Activated CD4-positive, alpha-beta T cell treated with anti-CD3 and anti-CD28 coated beads for 36 hours (primary cell): ENCODE measurements at regions of chr16 and their contacts with region 1.

Region 1: DNA sequence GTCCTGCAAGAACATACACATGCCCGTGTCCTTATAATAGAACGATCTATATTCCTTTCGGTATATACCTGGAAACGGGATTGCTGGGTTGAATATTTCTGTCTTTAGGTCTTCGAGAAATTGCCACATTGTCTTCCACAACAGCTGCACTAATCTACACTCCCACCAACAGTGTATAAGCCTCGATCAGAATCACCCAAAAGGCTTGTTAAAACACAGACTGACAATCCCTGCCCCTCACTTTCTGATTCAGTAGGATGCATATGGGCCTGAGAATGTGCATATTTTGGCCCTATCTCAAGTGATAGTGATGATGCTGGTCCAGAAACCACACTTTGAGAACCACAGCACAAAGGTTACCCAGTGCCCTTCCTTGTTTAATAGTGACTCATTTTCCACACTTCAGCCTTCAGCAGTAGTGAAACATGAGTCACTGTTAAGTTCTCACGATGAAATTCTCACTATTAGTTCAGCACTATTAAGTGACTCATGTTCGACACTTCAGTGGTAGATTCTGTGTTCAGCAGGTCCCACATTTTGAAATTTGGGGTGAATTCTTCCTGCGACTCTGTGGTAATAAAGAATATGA is 215.6 kb downstream of the GRIN2A start:
- DNase-seq: peak; percentile 31
- ATAC-seq: peak; percentile 83
- H3K4me3 Mint-ChIP-seq: no peak overlapping the region
- H3K27ac Mint-ChIP-seq: no peak overlapping the region
- H3K4me1 Mint-ChIP-seq: peaks cover 3% of the 10 kb centered on the region
- H3K27me3 Mint-ChIP-seq: peaks cover 10% of the 10 kb centered on the region

Region 2: DNA sequence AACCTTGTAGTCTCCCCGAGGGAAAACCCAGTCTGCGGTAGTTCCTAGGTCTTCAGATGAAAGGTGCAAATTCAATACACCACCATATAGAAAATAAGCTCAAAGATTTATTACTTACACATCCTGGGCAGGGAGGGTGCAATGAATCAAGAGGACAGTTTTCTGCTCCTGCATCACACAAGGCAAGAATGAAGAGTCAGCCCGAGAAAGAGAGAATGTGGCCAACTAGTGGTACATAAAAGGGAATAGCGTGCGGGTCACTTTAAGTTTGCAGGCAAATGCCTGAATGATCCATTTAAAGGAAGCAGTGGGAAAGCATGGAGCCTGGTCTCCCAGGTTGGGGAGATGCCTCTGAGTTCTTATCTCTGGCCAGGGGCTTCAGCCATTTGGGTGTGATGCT is 187.8 kb before region 1 on chr16:
- CTCF ChIA-PET with region 1: no interaction called
- POLR2A ChIA-PET with region 1: no interaction called
- intact Hi-C with region 1: no loop called
- DNase-seq: no peak
- ATAC-seq: no peak
- H3K4me3 Mint-ChIP-seq: no peak overlapping the region
- H3K27ac Mint-ChIP-seq: no peak overlapping the region
- H3K4me1 Mint-ChIP-seq: no peaks in the 10 kb centered on the region
- H3K27me3 Mint-ChIP-seq: no peaks in the 10 kb centered on the region

Region 3: DNA sequence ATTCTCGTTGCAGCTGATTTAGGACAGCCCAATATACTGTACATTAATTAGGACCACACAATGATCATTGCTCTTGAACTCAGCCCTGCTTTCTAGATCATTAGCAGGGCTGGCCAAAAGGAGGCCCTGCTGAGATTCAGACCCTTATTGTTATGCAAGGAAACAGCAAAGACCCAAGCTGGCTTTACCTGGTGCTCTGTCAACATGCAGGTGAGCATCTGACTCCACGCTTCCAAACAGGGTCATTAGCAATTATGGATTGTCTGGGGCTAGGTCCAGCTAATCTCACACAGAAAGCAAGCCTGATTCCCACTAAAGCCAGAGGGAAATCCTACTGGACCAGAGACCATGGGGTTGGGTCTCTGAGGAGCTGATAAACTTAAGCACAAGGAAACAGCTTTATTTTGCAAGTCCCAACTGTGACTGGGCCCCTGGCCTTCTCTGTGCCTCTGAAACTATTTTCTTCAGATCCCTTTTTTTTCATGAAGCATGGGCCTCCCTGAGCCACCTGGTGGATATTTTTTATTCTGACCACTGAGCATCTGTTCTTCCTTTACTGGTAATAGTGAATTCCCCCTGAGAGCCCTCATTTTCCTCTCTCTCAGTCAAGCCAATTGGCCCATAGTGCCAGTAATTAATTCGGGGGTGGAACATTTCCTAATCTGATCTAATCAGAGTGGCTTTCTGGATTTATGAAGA is 20.5 kb before region 1 on chr16:
- CTCF ChIA-PET with region 1: no interaction called
- POLR2A ChIA-PET with region 1: no interaction called
- intact Hi-C with region 1: no loop called
- DNase-seq: no peak
- ATAC-seq: no peak
- H3K4me3 Mint-ChIP-seq: no peak overlapping the region
- H3K27ac Mint-ChIP-seq: no peak overlapping the region
- H3K4me1 Mint-ChIP-seq: no peaks in the 10 kb centered on the region
- H3K27me3 Mint-ChIP-seq: peaks cover 4% of the 10 kb centered on the region

Region 4: DNA sequence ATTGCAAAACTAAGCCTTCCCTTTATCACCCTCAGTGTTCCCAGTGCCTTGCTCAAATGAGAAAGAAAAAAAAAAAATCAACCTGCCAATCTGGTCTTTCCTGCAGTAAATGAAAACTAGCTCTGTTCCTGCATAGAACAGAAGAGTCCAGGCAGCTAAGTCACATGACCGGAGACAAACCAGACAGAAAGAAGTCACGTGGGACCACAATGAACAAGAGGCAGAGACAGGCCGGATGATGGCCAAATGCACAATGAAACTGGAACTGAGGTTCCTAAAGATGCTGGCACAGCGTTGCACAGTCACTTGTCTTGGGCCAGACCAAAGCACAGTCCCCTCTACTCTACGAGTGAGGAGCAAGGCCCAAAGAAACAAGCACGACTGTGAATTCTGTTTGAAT is 43.0 kb after region 1 on chr16:
- CTCF ChIA-PET with region 1: no interaction called
- POLR2A ChIA-PET with region 1: no interaction called
- intact Hi-C with region 1: no loop called
- DNase-seq: no peak
- ATAC-seq: no peak
- H3K4me3 Mint-ChIP-seq: no peak overlapping the region
- H3K27ac Mint-ChIP-seq: no peak overlapping the region
- H3K4me1 Mint-ChIP-seq: no peaks in the 10 kb centered on the region
- H3K27me3 Mint-ChIP-seq: peaks cover 5% of the 10 kb centered on the region

Region 5: DNA sequence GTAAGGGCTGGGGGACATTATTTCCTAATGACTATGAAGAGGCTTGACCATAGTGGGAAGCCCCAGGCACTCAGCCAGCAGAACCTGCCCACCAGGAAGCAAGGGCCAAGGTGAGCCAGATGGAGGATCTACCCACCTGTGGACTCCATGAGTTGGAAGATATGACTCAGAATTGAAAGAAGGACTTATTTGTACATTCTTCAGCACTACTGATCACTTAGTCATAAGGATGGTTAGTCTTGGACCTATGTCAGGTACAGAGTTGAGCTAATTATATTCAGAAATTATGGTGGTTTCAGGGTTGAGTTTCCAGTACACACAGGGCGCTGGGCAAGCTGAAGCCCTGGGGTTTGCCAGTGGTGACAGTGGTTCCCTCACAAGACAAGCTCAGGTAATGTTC is 239.6 kb after region 1 on chr16:
- CTCF ChIA-PET with region 1: no interaction called
- POLR2A ChIA-PET with region 1: no interaction called
- intact Hi-C with region 1: no loop called
- DNase-seq: no peak
- ATAC-seq: no peak
- H3K4me3 Mint-ChIP-seq: no peak overlapping the region
- H3K27ac Mint-ChIP-seq: no peak overlapping the region
- H3K4me1 Mint-ChIP-seq: no peaks in the 10 kb centered on the region
- H3K27me3 Mint-ChIP-seq: peaks cover 8% of the 10 kb centered on the region

Region 6: DNA sequence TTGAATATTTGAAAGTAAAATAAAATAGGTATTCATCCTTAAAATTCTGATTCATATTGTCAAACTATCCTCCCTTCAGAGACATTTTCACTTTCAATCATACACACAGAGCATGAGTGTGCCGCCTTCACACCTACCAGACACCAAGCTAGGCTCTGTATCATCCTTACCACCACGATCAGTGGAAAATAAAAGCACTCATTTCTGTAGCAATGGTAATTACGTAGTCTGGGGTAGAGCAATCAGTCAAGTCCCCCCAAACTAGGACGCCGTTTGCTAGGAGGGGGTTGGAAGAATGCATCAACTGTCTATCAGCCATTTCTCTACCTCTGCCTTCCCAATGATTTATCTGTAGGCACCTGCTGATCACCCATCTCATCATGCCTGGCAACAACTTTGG is 300.1 kb after region 1 on chr16:
- CTCF ChIA-PET with region 1: no interaction called
- POLR2A ChIA-PET with region 1: no interaction called
- intact Hi-C with region 1: loop called in 1 of 2 experiments (anchors 2 kb)
- DNase-seq: peak; percentile 71
- ATAC-seq: peak; percentile 98
- H3K4me3 Mint-ChIP-seq: no peak overlapping the region
- H3K27ac Mint-ChIP-seq: peak overlapping the region; percentile 63
- H3K4me1 Mint-ChIP-seq: peaks cover 12% of the 10 kb centered on the region
- H3K27me3 Mint-ChIP-seq: no peaks in the 10 kb centered on the region